H1 (cell line): ENCODE measurements at regions of chr5 and their contacts with region 1.

Region 1: DNA sequence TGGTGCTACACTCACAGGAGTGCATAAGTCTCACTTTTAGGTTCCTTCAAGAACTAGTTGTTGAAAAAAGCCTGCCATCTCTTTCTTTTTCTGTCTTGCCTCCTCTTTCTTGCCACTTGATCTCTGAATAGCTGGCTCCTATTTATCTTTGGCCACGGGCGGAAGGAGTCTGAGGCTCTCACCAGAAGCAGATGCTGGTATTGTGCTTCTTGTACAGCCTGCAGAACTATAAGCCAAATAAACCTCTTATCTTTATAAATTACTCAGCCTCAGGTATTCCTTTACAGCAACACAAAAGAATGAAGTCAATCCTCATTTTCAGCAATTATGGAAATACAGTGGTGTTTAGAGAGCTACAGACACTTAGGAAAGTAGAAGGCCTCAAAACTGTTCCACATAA is 247.1 kb upstream of the PRR16 start:
- DNase-seq: no peak
- H3K4me3 ChIP-seq: no peak overlapping the region
- H3K27ac ChIP-seq: no peak overlapping the region
- H3K4me1 ChIP-seq: no peaks in the 10 kb centered on the region
- H3K27me3 ChIP-seq: no peaks in the 10 kb centered on the region
- CTCF ChIP-seq: no peak
- EP300 ChIP-seq: no peak
- POLR2A ChIP-seq: no peak
- RAD21 ChIP-seq: no peak

Region 2: DNA sequence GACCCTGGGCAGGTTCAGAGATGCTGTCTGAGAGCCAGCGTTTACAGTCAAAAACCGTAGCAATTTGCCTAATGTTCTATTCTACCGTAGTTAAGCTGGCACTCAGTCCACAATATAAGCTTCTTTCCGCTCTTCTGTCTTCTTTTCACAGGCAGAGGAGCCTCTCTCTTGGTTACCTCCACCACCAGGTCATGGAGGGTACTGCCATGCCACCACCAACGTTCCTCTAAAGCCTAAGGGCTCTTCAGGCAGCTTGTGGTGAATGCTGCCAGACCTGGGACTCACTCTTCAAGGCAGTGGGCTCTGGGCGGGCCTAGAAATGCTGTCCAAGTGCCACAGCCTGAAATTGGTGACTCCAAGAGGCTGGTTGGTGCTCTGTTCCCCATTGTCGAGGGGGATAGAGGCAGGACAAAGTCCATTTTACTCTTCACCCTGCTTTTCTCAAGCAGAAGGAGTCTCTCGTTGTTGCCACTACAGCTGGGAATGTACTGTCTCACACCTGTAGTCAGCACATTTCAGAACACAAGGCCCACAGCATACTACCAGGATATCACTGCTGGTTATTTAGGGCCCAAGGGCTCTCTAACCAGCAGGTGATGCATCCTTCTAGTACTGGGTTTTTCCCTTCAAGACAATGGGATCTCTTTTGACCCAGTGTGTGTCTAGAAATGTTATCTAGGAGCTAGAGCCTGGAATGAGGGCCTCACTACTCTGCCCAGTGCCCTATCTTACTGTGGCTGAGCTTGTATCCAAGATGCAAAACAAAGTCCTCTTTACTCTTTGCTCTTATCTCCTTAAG is 11.8 kb after region 1 on chr5:
- CTCF ChIA-PET with region 1: interaction called, 17 read pairs
- POLR2A ChIA-PET with region 1: no interaction called
- DNase-seq: no peak
- H3K4me3 ChIP-seq: no peak overlapping the region
- H3K27ac ChIP-seq: no peak overlapping the region
- H3K4me1 ChIP-seq: no peaks in the 10 kb centered on the region
- H3K27me3 ChIP-seq: no peaks in the 10 kb centered on the region
- CTCF ChIP-seq: peak; percentile 13 to 56 (median 35); a peak in 3 of 4 replicates
- EP300 ChIP-seq: no peak
- POLR2A ChIP-seq: no peak
- RAD21 ChIP-seq: peak; percentile 33 to 39; a peak in 3 of 4 replicates